ENCODE measurements at regions of chrX and their contacts with region 1.

Region 1: DNA sequence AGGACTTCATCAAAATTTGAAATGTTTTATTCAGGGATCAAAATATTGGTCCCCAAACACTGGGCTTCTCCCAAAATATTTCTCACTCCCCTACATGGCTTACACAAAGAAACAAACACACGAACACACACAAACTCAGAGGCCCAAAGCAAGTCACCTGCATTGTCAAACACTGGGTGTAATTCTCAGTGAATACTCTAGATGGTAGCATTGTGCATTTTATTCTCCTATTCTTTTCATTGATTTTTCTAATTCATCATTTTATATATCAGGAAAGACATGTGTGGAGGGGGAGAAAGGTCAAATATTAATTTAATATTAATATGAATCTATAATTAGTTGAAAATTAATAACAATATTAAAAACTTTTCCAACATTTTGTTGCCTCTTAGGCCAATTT is 72.3 kb upstream of the TNMD start:
- DNase-seq: no peak
- ATAC-seq: peak; percentile 59
- H3K4me3 ChIP-seq: no peak overlapping the region
- H3K27ac ChIP-seq: no peak overlapping the region
- H3K4me1 ChIP-seq: no peaks in the 10 kb centered on the region
- H3K27me3 ChIP-seq: no peaks in the 10 kb centered on the region
- CTCF ChIP-seq: peak; percentile 41 to 68 (median 53); a peak in 5 of 6 replicates
- EP300 ChIP-seq: no peak
- POLR2A ChIP-seq: no peak
- RAD21 ChIP-seq: peak; percentile 40

Region 2: DNA sequence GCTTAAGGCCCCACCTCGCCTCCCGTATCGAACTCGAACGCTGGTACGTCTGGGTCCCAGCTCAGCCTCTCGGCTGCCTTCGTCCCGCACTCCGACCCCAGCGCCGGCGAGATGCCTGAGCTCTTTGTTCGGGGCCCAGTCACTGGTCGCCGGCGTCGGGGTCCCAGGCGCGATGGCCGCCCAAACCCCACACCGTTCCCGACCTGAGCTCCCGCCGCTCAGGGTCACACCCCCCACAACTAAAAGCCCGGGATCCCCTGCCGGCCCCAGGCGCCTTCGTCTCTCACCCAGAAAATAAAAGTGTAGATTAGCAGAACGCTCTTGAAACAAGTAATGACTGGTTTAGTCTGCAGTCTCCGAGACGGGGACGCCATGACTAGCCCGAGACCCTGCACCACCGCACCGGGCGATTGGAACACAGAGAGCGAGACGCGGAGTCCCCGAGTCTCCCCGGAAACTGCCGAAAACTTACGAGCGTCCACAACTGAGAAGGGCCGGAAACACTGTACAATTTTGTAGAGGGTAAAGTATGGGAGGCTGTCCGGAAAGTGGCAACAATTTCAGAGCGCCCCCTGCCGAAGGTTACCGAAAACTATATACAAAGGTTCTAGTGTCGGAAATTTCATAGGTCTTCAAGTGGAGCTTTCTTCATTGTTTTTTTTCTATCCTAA is 124.0 kb after region 1 on chrX and contains the start of gene TSPAN6:
- CTCF ChIA-PET with region 1: interaction called, 3 read pairs
- POLR2A ChIA-PET with region 1: no interaction called
- RAD21 ChIA-PET with region 1: no interaction called
- SMC1A ChIA-PET with region 1: no interaction called
- in situ Hi-C with region 1: no loop called
- intact Hi-C with region 1: loop called (anchors 10 kb)
- DNase-seq: no peak
- ATAC-seq: peak; percentile 72
- H3K4me3 ChIP-seq: no peak within 1 kb of the TSS
- H3K27ac ChIP-seq: no peak within 1 kb of the TSS
- H3K4me1 ChIP-seq: no peaks in the 10 kb centered on the region
- H3K27me3 ChIP-seq: peaks cover 0 to 2% of the 10 kb centered on the region in 2 experiments; a peak in 2 of 4 replicates
- CTCF ChIP-seq: peak; percentile 7 to 30 (median 19); a peak in 4 of 6 replicates
- EP300 ChIP-seq: no peak
- POLR2A ChIP-seq: no peak
- RAD21 ChIP-seq: 0 out of 2 replicates have a peak, but pooled peaks have one; percentile 14
- polyA plus RNA-seq, gene TSPAN6: not detected